B cell (primary cell): ENCODE measurements at regions of chr10 and their contacts with region 1.

Region 1: GRCh38 chr10:26540601-26541000 is 102.5 kb downstream of the APBB1IP start:
- DNase-seq: peak; percentile 66
- ATAC-seq: peak; percentile 64
- H3K4me3 ChIP-seq: no peak overlapping the region
- H3K4me3 Mint-ChIP-seq: peak overlapping the region; percentile 14
- H3K27ac ChIP-seq: peak overlapping the region in 1 of 2 donors; percentile 59
- H3K27ac Mint-ChIP-seq: peak overlapping the region; percentile 71
- H3K4me1 ChIP-seq: peaks cover 9 to 11% of the 10 kb centered on the region in 2 donors
- H3K4me1 Mint-ChIP-seq: peaks cover 35% of the 10 kb centered on the region
- H3K27me3 ChIP-seq: no peaks in the 10 kb centered on the region
- H3K27me3 Mint-ChIP-seq: no peaks in the 10 kb centered on the region
- CTCF ChIP-seq: no peak

Region 2: GRCh38 chr10:26486991-26487850 is 53.4 kb before region 1 on chr10:
- CTCF ChIA-PET with region 1: no interaction called
- POLR2A ChIA-PET with region 1: no interaction called
- intact Hi-C with region 1: loop called (anchors 10 kb)
- DNase-seq: peak; percentile 24
- ATAC-seq: peak; percentile 78
- H3K4me3 ChIP-seq: no peak overlapping the region
- H3K4me3 Mint-ChIP-seq: peak overlapping the region; percentile 74
- H3K27ac ChIP-seq: peak overlapping the region; percentile 36 to 67
- H3K27ac Mint-ChIP-seq: peak overlapping the region; percentile 89
- H3K4me1 ChIP-seq: peaks cover 40 to 43% of the 10 kb centered on the region in 2 donors
- H3K4me1 Mint-ChIP-seq: peaks cover 54% of the 10 kb centered on the region
- H3K27me3 ChIP-seq: no peaks in the 10 kb centered on the region
- H3K27me3 Mint-ChIP-seq: no peaks in the 10 kb centered on the region
- CTCF ChIP-seq: no peak